Ascending aorta (tissue), 2 donors: ENCODE measurements at regions of chr11 and their contacts with region 1.

Region 1: DNA sequence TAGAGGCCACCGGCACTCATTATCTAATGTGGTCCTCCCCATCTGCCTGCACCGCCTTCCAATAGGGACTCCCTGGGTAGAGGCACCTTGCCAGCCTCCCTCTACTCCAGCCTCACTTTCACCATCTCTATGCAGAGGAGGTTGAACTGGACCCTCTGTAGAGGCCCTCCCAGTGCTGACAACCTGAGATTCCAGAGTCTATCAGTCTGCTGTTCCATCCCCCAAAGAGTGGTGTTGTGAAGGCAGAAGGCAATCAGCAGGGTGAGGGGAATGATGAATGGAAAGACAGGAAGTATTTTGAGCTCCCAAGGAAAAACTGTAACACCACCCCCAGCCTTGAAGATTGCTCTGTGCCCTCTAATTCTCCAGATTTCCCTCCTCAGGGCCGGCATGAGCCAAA is 77.9 kb downstream of the THAP12 start:
- DNase-seq: no peak
- H3K4me3 ChIP-seq: no peak overlapping the region
- H3K27ac ChIP-seq: no peak overlapping the region
- H3K4me1 ChIP-seq: no peaks in the 10 kb centered on the region
- H3K27me3 ChIP-seq: no peaks in the 10 kb centered on the region
- CTCF ChIP-seq: no peak

Region 2: GRCh38 chr11:76251576-76251975 is 51.4 kb before region 1 on chr11:
- intact Hi-C with region 1: loop called (anchors 5 kb)
- DNase-seq: no peak
- H3K4me3 ChIP-seq: no peak overlapping the region
- H3K27ac ChIP-seq: no peak overlapping the region
- H3K4me1 ChIP-seq: no peaks in the 10 kb centered on the region
- H3K27me3 ChIP-seq: no peaks in the 10 kb centered on the region
- CTCF ChIP-seq: no peak